CD4-positive, alpha-beta T cell (primary cell): ENCODE measurements at regions of chr18 and their contacts with region 1.

Region 1: GRCh38 chr18:48675352-48675761 is 136.5 kb downstream of the CTIF start:
- DNase-seq: peak; percentile 61 to 90 (median 78)
- ATAC-seq: peak; percentile 96
- H3K4me3 ChIP-seq: no peak overlapping the region
- H3K4me3 Mint-ChIP-seq: no peak overlapping the region
- H3K27ac ChIP-seq: no peak overlapping the region
- H3K27ac Mint-ChIP-seq: no peak overlapping the region
- H3K4me1 ChIP-seq: peaks cover 9% of the 10 kb centered on the region
- H3K4me1 Mint-ChIP-seq: no peaks in the 10 kb centered on the region
- H3K27me3 ChIP-seq: no peaks in the 10 kb centered on the region
- H3K27me3 Mint-ChIP-seq: no peaks in the 10 kb centered on the region
- CTCF ChIP-seq: peak; percentile 79

Region 2: DNA sequence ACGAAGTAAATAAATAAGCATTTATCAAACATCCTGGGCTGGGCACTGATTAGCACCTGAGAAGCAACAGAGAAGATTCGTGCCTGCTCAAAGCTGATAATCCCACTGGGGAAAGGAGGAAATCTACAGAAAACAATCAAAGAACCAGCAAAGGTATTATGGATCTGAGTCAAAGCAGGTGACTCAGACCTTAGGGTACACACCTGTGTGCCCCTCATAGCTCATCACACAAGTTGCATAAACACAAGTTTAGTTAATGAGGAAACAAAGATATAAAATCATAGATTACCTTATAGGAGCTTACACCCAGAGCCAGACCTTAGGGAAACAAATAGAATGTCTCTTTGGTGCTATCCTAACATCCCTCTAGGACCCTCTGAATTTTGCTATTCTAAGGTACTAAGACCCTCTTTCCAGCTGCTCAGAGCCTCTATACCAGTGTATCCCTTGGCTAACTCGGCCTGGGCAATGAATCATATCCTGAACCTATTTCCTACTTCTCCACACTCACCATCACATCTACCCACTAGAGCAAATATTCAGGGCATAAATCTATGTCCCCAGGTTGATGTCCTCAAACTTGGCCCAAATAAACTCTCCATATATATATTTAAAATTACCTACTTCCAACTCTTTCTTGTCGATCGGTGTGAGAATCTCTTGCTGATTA is 155.8 kb before region 1 on chr18:
- CTCF ChIA-PET with region 1: no interaction called
- POLR2A ChIA-PET with region 1: no interaction called
- intact Hi-C with region 1: no loop called
- DNase-seq: no peak
- ATAC-seq: no peak
- H3K4me3 ChIP-seq: no peak overlapping the region
- H3K4me3 Mint-ChIP-seq: no peak overlapping the region
- H3K27ac ChIP-seq: no peak overlapping the region
- H3K27ac Mint-ChIP-seq: no peak overlapping the region
- H3K4me1 ChIP-seq: no peaks in the 10 kb centered on the region
- H3K4me1 Mint-ChIP-seq: no peaks in the 10 kb centered on the region
- H3K27me3 ChIP-seq: peaks cover 12 to 15% of the 10 kb centered on the region in 2 experiments
- H3K27me3 Mint-ChIP-seq: peaks cover 72% of the 10 kb centered on the region
- CTCF ChIP-seq: no peak

Region 3: GRCh38 chr18:48613589-48614404 is 61.6 kb before region 1 on chr18:
- CTCF ChIA-PET with region 1: no interaction called
- POLR2A ChIA-PET with region 1: no interaction called
- intact Hi-C with region 1: no loop called
- DNase-seq: no peak
- ATAC-seq: no peak
- H3K4me3 ChIP-seq: no peak overlapping the region
- H3K4me3 Mint-ChIP-seq: no peak overlapping the region
- H3K27ac ChIP-seq: no peak overlapping the region
- H3K27ac Mint-ChIP-seq: no peak overlapping the region
- H3K4me1 ChIP-seq: no peaks in the 10 kb centered on the region
- H3K4me1 Mint-ChIP-seq: no peaks in the 10 kb centered on the region
- H3K27me3 ChIP-seq: no peaks in the 10 kb centered on the region
- H3K27me3 Mint-ChIP-seq: no peaks in the 10 kb centered on the region
- CTCF ChIP-seq: no peak

Region 4: DNA sequence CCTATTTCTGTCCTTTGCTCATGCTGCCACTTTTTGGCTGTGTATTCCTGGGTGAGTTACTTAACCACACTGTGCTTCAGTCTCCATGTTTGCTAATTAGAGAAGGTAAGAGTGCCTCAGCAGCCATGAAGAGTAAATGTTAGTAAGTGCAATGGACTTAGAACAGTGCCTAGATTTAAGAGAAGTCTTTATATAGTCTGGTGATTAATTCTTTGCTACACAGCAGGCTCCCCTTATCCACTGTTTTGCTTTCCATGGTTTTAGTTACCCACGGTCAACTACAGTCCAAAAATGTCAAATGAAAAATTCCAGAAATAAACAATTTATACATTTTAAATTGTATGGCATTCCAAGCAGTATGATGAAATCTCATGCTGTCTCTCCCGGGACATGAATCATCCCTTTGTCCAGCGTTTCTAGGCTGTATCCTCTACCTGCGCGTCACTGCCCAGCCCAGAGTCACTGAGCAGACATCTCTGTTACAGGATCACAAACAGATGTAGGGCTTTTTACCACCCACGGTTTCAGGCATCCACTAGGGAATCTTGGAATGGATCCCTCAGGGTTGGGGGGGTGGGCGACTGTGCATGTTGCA is 45.5 kb before region 1 on chr18:
- CTCF ChIA-PET with region 1: no interaction called
- POLR2A ChIA-PET with region 1: no interaction called
- intact Hi-C with region 1: no loop called
- DNase-seq: no peak
- ATAC-seq: no peak
- H3K4me3 ChIP-seq: no peak overlapping the region
- H3K4me3 Mint-ChIP-seq: no peak overlapping the region
- H3K27ac ChIP-seq: no peak overlapping the region
- H3K27ac Mint-ChIP-seq: no peak overlapping the region
- H3K4me1 ChIP-seq: no peaks in the 10 kb centered on the region
- H3K4me1 Mint-ChIP-seq: no peaks in the 10 kb centered on the region
- H3K27me3 ChIP-seq: no peaks in the 10 kb centered on the region
- H3K27me3 Mint-ChIP-seq: peaks cover 5% of the 10 kb centered on the region
- CTCF ChIP-seq: no peak

Region 5: DNA sequence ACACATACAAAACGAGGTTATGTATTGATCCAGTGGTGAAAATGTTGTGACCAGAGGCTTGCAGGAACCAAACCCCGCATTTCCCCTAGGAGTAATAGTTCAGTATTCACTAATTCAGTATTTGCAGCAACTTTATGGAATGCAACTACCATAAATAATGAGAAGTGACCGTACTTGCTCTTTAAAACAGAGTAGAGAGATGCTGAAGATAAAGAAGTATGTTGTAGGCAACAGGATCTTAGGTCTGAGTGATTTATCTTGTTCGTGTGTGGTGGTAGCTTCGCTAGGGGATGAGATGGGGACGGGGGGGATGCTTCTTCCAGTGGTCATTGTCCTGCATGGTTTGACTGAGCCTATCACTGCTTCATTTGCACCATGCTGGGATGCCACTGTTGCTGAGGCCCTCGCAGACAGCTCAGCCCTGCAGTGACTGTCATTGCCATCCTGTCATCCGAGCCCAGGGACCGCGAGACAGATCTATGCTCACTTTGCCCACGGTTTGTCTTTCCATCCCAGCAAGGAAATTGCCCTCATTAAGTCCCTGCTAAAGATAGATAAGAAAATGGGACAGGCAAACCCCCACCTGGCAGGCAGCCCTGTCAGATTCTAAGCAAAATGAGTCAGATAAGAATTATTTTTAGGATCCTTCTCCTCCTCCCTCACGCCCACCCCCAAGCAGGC is 44.8 kb after region 1 on chr18:
- CTCF ChIA-PET with region 1: no interaction called
- POLR2A ChIA-PET with region 1: no interaction called
- intact Hi-C with region 1: no loop called
- DNase-seq: no peak
- ATAC-seq: no peak
- H3K4me3 ChIP-seq: no peak overlapping the region
- H3K4me3 Mint-ChIP-seq: no peak overlapping the region
- H3K27ac ChIP-seq: no peak overlapping the region
- H3K27ac Mint-ChIP-seq: no peak overlapping the region
- H3K4me1 ChIP-seq: peaks cover 3% of the 10 kb centered on the region
- H3K4me1 Mint-ChIP-seq: no peaks in the 10 kb centered on the region
- H3K27me3 ChIP-seq: no peaks in the 10 kb centered on the region
- H3K27me3 Mint-ChIP-seq: no peaks in the 10 kb centered on the region
- CTCF ChIP-seq: no peak

Region 6: GRCh38 chr18:48951448-48952286 is 276.3 kb after region 1 on chr18:
- CTCF ChIA-PET with region 1: no interaction called
- POLR2A ChIA-PET with region 1: no interaction called
- intact Hi-C with region 1: loop called in 1 of 2 experiments (anchors 10 kb)
- DNase-seq: peak; percentile 59 to 95 (median 79)
- ATAC-seq: peak; percentile 30
- H3K4me3 ChIP-seq: peak overlapping the region; percentile 91
- H3K4me3 Mint-ChIP-seq: peak overlapping the region; percentile 99
- H3K27ac ChIP-seq: peak overlapping the region; percentile 88 to 93
- H3K27ac Mint-ChIP-seq: peak overlapping the region; percentile 99
- H3K4me1 ChIP-seq: peaks cover 63% of the 10 kb centered on the region
- H3K4me1 Mint-ChIP-seq: peaks cover 57% of the 10 kb centered on the region
- H3K27me3 ChIP-seq: no peaks in the 10 kb centered on the region
- H3K27me3 Mint-ChIP-seq: no peaks in the 10 kb centered on the region
- CTCF ChIP-seq: no peak

Region 7: GRCh38 chr18:49178736-49179135 is 503.4 kb after region 1 on chr18:
- CTCF ChIA-PET with region 1: no interaction called
- POLR2A ChIA-PET with region 1: no interaction called
- intact Hi-C with region 1: loop called (anchors 1 to 2 kb)
- DNase-seq: peak in 3 of 14 experiments; percentile 18 to 36 (median 23)
- ATAC-seq: no peak
- H3K4me3 ChIP-seq: no peak overlapping the region
- H3K4me3 Mint-ChIP-seq: no peak overlapping the region
- H3K27ac ChIP-seq: no peak overlapping the region
- H3K27ac Mint-ChIP-seq: no peak overlapping the region
- H3K4me1 ChIP-seq: no peaks in the 10 kb centered on the region
- H3K4me1 Mint-ChIP-seq: peaks cover 12% of the 10 kb centered on the region
- H3K27me3 ChIP-seq: no peaks in the 10 kb centered on the region
- H3K27me3 Mint-ChIP-seq: no peaks in the 10 kb centered on the region
- CTCF ChIP-seq: no peak

Region 8: DNA sequence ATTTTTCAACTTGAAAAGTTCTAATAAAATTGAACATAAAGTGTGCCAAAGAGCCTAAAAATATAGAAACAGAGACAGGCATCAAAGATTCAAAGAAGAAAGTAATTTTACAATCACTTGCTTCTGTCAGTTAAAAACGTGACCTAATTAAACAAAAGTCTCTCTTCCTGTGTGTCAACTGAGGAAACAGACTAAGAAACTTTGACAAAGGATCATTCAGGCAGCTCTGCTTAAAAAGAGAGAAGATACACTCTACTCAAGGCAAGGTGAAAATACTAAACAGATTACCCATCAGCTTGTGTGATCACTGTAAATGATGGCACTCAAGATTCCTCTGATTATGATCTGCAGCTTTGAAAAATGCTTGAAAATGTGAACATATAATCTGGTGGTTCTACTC is 737.3 kb after region 1 on chr18:
- CTCF ChIA-PET with region 1: no interaction called
- POLR2A ChIA-PET with region 1: no interaction called
- intact Hi-C with region 1: loop called (anchors 2 to 5 kb)
- DNase-seq: peak in 2 of 14 experiments; percentile 6 to 31
- ATAC-seq: peak; percentile 52
- H3K4me3 ChIP-seq: no peak overlapping the region
- H3K4me3 Mint-ChIP-seq: peak overlapping the region; percentile 18
- H3K27ac ChIP-seq: peak overlapping the region in 1 of 2 donors; percentile 9
- H3K27ac Mint-ChIP-seq: peak overlapping the region; percentile 82
- H3K4me1 ChIP-seq: no peaks in the 10 kb centered on the region
- H3K4me1 Mint-ChIP-seq: peaks cover 38% of the 10 kb centered on the region
- H3K27me3 ChIP-seq: no peaks in the 10 kb centered on the region
- H3K27me3 Mint-ChIP-seq: no peaks in the 10 kb centered on the region
- CTCF ChIP-seq: no peak

Region 9: DNA sequence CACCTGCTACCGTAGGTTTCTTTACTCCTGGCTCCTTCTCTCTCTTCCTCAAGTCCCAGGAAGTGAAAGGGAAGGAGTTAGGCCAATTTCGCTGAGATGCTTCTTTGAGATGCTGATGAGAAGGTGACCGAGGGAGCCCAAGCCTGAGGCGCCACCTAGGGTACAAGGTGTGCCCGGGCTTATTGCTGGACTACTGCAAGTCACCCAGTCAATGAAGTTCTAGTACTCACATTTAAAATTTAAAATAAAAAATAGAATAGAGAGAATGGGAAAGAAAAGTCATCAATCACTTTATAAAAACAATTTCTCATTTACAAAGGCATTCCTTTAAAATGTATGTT is 1092.7 kb after region 1 on chr18:
- CTCF ChIA-PET with region 1: no interaction called
- POLR2A ChIA-PET with region 1: no interaction called
- intact Hi-C with region 1: loop called in 1 of 2 experiments (anchors 5 kb)
- DNase-seq: peak in 2 of 14 experiments; percentile 26 to 40
- ATAC-seq: no peak
- H3K4me3 ChIP-seq: no peak overlapping the region
- H3K4me3 Mint-ChIP-seq: no peak overlapping the region
- H3K27ac ChIP-seq: no peak overlapping the region
- H3K27ac Mint-ChIP-seq: no peak overlapping the region
- H3K4me1 ChIP-seq: no peaks in the 10 kb centered on the region
- H3K4me1 Mint-ChIP-seq: peaks cover 6% of the 10 kb centered on the region
- H3K27me3 ChIP-seq: no peaks in the 10 kb centered on the region
- H3K27me3 Mint-ChIP-seq: no peaks in the 10 kb centered on the region
- CTCF ChIP-seq: no peak

Region 10: DNA sequence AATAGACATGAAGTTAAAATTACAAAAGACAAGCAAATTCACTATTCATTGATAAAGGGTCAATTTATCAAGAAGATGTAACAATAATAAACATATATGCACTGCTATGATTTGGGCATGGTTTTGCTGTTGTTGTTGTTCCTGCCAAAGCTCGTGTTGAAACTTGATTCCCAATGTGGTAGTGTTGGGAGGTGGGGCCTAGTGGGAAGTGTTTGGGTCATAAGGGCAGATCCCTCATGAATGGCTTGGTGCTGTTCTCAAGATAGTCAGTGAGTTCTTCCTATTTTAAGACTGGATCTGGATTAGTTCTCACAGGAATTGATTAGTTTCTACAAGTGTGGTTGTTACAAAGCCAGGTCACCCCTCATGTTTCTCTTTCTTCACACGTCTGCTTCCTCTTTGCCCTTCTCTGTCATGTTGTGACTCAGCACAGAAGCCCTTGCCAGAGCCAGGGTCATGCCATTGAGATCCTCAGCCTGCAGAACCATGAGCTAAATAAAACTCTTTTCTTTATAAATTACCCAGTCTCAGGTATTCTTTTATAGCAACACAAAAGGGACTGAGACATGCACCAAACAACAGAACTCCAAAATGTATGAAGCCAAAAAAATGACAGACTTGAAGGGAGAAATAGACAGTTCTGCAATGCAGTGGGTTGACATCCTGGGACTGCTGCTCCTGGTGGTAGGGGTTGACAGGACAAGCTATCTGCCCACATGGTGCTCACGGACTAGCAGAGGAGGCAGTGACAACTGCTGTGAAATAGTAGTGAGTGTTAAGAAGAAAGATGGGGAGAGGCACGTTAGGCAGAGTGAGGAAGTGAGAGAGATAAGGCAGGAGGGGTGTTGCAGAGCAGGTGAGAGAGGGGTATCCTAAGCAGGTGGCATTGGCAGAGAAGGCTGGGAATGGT is 1680.9 kb after region 1 on chr18:
- CTCF ChIA-PET with region 1: no interaction called
- POLR2A ChIA-PET with region 1: no interaction called
- intact Hi-C with region 1: loop called in 1 of 2 experiments (anchors 5 kb)
- DNase-seq: peak in 3 of 14 experiments; percentile 13 to 43 (median 37)
- ATAC-seq: peak; percentile 16
- H3K4me3 ChIP-seq: no peak overlapping the region
- H3K4me3 Mint-ChIP-seq: no peak overlapping the region
- H3K27ac ChIP-seq: no peak overlapping the region
- H3K27ac Mint-ChIP-seq: no peak overlapping the region
- H3K4me1 ChIP-seq: peaks cover 6% of the 10 kb centered on the region
- H3K4me1 Mint-ChIP-seq: peaks cover 4% of the 10 kb centered on the region
- H3K27me3 ChIP-seq: peaks cover 3 to 9% of the 10 kb centered on the region in 2 experiments
- H3K27me3 Mint-ChIP-seq: peaks cover 36% of the 10 kb centered on the region
- CTCF ChIP-seq: no peak